ENCODE measurements at regions of chr6 and their contacts with region 1.

Region 1: GRCh38 chr6:117449549-117450439 is 24.1 kb upstream of the ROS1 start:
- DNase-seq: peak; percentile 69
- H3K4me3 Mint-ChIP-seq: no peak overlapping the region
- H3K27ac Mint-ChIP-seq: no peak overlapping the region
- H3K4me1 Mint-ChIP-seq: no peaks in the 10 kb centered on the region
- H3K27me3 Mint-ChIP-seq: peaks cover 40% of the 10 kb centered on the region

Region 2: GRCh38 chr6:117602899-117603588 is 153.2 kb after region 1 on chr6:
- CTCF ChIA-PET with region 1: interaction called, 10 read pairs
- POLR2A ChIA-PET with region 1: no interaction called
- DNase-seq: no peak
- H3K4me3 Mint-ChIP-seq: peak overlapping the region; percentile 94
- H3K27ac Mint-ChIP-seq: peak overlapping the region; percentile 99
- H3K4me1 Mint-ChIP-seq: peaks cover 34% of the 10 kb centered on the region
- H3K27me3 Mint-ChIP-seq: peaks cover 3% of the 10 kb centered on the region

Measured in activated CD4-positive, alpha-beta T cell treated with anti-CD3 and anti-CD28 coated beads, Interleukin-2, amount 10 ng/mL, durations not matched to agents 7 days and 5 days (primary cell).